ENCODE measurements at regions of chr11 and their contacts with region 1.

Region 1: GRCh38 chr11:5684646-5685362 is at the start of gene TRIM5:
- H3K4me3 Mint-ChIP-seq: peak within 1 kb of the TSS; percentile 91
- H3K27ac Mint-ChIP-seq: peak within 1 kb of the TSS; percentile 92
- H3K4me1 Mint-ChIP-seq: peaks cover 42% of the 10 kb centered on the region
- H3K27me3 Mint-ChIP-seq: no peaks in the 10 kb centered on the region

Region 2: DNA sequence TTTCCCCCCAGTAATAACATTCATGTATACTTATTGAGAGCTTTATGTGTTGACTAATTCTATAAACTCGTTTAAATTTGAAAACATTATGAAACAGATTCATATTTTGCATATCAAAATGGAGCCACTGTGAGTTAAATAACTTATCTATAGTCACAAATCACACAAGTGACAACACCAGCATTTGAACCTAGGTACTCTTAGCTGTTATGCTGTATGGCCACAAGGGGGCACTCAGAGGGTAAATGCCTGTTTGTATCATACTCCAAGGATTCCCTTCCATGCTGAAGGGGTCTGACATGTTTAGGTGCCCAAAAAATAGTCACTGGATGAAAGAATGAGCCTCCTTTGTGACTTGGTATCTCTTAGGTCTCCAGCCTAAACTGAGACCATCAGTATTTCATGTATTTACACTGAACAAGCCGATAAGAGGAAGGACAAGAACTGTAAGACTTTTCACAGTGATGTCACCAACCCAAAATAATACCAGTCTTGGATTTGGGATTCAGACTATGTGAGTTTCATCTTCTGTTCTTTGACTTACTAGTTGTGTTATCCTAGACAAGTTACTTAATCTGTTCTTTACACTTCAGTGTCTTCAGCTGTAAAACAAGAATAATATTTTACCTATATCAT is 208.5 kb before region 1 on chr11:
- intact Hi-C with region 1: no loop called
- H3K4me3 Mint-ChIP-seq: no peak overlapping the region
- H3K27ac Mint-ChIP-seq: no peak overlapping the region
- H3K4me1 Mint-ChIP-seq: no peaks in the 10 kb centered on the region
- H3K27me3 Mint-ChIP-seq: peaks cover 1% of the 10 kb centered on the region

Region 3: GRCh38 chr11:5624489-5625279 is 60.1 kb before region 1 on chr11 and contains the start of gene TRIM34:
- intact Hi-C with region 1: loop called (anchors 5 kb)
- H3K4me3 Mint-ChIP-seq: peak within 1 kb of the TSS; percentile 86
- H3K27ac Mint-ChIP-seq: peak within 1 kb of the TSS; percentile 92
- H3K4me1 Mint-ChIP-seq: peaks cover 42% of the 10 kb centered on the region
- H3K27me3 Mint-ChIP-seq: no peaks in the 10 kb centered on the region

Region 4: DNA sequence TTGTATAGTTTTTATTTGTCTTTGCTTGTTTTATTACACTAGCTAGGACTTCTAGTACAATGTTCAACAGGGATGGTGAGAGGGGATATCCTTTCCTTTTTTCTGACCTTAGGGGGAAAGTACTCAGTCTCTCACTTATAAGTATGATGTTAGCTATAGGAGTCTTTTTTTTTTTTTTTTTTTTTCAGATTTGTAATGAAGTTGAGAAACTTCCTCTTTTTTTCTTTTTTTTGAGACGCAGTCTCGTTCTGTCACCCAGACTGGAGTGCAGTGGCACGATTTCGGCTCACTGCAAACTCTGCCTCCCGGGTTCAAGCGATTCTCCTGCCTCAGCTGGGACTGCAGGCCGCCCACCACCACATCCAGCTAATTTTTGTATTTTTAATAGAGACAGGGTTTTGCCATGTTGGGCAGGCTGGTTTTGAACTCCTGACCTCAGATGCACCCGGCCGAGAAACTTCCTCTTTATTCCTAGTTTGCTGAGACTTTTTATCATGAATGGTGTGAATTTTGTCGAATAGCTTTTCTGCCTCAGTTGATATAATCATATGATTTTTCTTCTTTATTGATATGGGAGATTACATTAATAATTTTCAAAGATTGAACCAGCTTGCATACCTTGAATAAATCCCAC is 15.7 kb after region 1 on chr11:
- intact Hi-C with region 1: loop called (anchors 1 kb)
- H3K4me3 Mint-ChIP-seq: peak overlapping the region; percentile 69
- H3K27ac Mint-ChIP-seq: peak overlapping the region; percentile 87
- H3K4me1 Mint-ChIP-seq: peaks cover 20% of the 10 kb centered on the region
- H3K27me3 Mint-ChIP-seq: no peaks in the 10 kb centered on the region

Region 5: GRCh38 chr11:6234387-6235107 is 549.7 kb after region 1 on chr11 and contains the start of gene FHIP1B:
- intact Hi-C with region 1: loop called (anchors 10 kb)
- H3K4me3 Mint-ChIP-seq: peak within 1 kb of the TSS; percentile 96
- H3K27ac Mint-ChIP-seq: peak within 1 kb of the TSS; percentile 95
- H3K4me1 Mint-ChIP-seq: peaks cover 57% of the 10 kb centered on the region
- H3K27me3 Mint-ChIP-seq: no peaks in the 10 kb centered on the region

Measured in dendritic cell treated with granulocyte-macrophage colony-stimulating factor and Interleukin-4, amounts not matched to agents 40 ng/mL and 50 ng/mL, for 4 days (primary cell).